ENCODE measurements at regions of chr2 and their contacts with region 1.

Region 1: GRCh38 chr2:46364797-46365457 is 67.7 kb downstream of the EPAS1 start:
- DNase-seq: no peak
- ATAC-seq: no peak
- H3K4me3 ChIP-seq: no peak overlapping the region
- H3K27ac ChIP-seq: no peak overlapping the region
- H3K4me1 ChIP-seq: no peaks in the 10 kb centered on the region
- H3K27me3 ChIP-seq: no peaks in the 10 kb centered on the region

Region 2: DNA sequence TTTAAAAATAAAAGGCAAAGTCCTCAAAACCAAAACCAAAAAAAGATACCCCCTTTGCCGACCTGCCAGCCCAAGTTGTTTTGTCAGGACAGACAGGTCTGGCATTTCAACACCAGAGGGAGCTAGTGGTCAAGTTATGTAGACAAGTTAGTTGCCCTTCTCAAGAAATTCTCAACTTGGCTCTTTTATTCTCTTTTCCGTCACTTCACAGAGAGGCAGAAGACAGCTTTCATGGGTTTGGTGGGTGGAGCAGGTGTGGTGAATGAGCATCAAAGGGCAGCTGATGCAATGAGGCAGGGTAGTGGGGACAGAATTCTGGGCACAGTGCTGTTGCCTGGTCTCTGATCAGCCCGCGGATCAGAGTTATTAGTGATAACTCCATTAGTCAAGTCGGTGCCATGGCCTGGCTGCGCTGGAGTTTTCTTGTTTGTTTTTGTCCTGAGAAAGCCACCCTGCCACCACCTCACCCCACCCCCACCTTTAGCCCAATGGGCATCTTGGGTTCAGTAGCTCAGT is 371.4 kb before region 1 on chr2:
- intact Hi-C with region 1: loop called in 1 of 2 experiments (anchors 5 kb)
- DNase-seq: peak in 1 of 2 donors; percentile 69
- ATAC-seq: peak; percentile 86
- H3K4me3 ChIP-seq: no peak overlapping the region
- H3K27ac ChIP-seq: peak overlapping the region in 1 of 2 donors; percentile 68
- H3K4me1 ChIP-seq: no peaks in the 10 kb centered on the region
- H3K27me3 ChIP-seq: no peaks in the 10 kb centered on the region

Region 3: DNA sequence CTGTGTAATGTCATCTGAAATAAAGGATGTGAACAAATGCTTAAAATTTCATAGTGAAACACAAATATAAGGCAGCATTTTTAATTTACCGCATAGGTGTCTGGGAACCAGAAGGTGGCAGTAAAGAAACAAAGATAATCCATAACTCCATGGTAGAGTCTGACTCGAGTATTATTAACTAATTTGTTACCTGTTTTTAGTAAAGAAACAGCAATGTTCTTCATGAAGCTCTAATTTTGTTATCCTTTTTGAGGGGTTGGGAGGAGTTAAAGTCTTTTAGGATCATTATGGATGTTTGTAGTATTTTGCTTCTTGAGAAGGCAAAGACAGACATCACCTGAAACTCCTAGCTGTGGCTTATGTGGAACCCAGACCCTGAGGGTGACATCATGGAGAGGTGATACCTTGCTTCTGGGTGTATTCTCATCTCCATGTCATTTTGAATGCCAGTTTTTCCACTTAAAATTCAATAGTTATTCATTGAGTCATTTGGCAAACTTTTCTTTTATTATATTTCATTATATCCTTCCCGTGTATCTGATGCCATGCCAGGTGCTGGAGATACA is 353.9 kb before region 1 on chr2:
- intact Hi-C with region 1: loop called (anchors 5 kb)
- DNase-seq: no peak
- ATAC-seq: no peak
- H3K4me3 ChIP-seq: no peak overlapping the region
- H3K27ac ChIP-seq: no peak overlapping the region
- H3K4me1 ChIP-seq: peaks cover 0 to 8% of the 10 kb centered on the region in 2 donors
- H3K27me3 ChIP-seq: no peaks in the 10 kb centered on the region

Region 4: DNA sequence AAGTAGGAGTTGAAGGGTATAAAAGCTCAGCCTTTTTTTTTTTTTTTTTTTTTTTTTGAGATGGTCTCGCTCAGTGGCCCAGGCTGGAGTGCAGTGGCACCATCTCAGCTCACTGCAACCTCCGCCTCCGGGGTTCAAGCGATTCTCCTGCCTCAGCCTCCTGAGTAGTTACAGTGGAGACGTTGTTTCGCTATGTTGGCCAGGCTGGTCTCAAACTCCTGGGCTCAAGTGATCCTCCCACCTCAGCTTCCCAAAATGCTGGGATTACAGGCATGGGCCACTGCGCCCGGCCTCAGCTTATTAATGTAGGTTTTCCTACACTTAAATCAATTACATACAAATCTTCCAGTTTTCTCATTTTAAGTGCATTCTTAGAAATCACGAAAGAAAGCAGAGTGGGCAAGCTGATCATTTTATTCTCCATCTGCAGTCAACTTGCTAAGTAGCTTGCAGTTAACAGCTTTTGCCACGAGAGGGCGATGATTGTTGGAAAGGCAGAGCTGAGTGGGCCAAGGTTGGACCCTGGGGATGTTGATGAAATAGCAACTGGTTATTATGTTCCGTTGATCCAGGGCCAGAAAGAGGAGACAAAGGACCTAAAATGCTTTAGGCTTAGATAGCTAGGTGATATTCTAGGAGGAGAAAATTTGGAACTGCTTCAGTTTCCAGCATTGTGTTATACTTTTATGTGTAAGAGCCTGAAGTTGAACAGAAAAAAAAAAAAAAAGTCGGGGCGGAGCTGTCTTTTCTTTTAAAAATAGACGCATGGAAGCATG is 302.1 kb before region 1 on chr2:
- intact Hi-C with region 1: loop called (anchors 5 kb)
- DNase-seq: peak; percentile 84
- ATAC-seq: peak; percentile 89
- H3K4me3 ChIP-seq: no peak overlapping the region
- H3K27ac ChIP-seq: no peak overlapping the region
- H3K4me1 ChIP-seq: no peaks in the 10 kb centered on the region
- H3K27me3 ChIP-seq: peaks cover 0 to 2% of the 10 kb centered on the region in 2 donors

Region 5: DNA sequence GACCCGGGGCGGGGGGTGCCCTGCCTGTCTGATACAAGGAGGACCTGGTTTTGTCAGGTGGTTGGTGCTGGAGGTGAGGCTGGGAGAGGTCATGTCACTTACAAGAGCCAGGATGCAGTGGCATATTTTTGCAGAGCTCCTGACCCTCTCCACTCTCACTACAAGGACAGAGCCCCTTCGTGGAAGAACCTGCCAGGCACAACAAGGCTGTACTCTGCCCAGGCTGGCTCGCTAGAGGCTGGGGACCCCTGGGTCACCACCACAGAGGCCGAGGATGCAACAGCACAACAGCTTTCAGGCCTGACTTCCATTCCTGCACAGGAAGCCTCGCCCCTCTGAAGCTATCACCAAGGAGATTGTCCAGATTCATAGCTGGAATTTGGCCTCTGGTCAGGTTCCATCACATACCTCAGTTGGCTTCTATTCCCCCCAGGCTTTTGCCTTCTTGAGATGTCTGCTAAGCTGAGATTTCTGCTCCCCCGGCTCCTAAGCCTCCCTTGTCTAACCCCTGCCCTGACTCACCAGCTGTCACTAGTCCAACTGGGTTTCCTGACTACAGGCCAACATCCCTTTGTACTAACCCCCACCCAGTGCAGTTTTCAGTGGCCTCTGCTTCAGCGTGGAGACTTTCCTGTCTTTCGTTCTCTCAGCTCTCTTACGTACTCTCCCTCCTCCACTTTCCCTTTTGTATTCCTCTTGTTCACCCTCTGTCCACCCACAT is 200.2 kb before region 1 on chr2:
- intact Hi-C with region 1: loop called in 1 of 2 experiments (anchors 10 kb)
- DNase-seq: peak; percentile 87 to 92
- ATAC-seq: peak; percentile 91
- H3K4me3 ChIP-seq: no peak overlapping the region
- H3K27ac ChIP-seq: peak overlapping the region; percentile 19 to 85
- H3K4me1 ChIP-seq: peaks cover 1 to 4% of the 10 kb centered on the region in 2 donors
- H3K27me3 ChIP-seq: no peaks in the 10 kb centered on the region

Region 6: GRCh38 chr2:46230115-46230571 is 134.8 kb before region 1 on chr2:
- intact Hi-C with region 1: loop called in 1 of 2 experiments (anchors 5 kb)
- DNase-seq: peak in 1 of 2 donors; percentile 81
- ATAC-seq: peak; percentile 83
- H3K4me3 ChIP-seq: no peak overlapping the region
- H3K27ac ChIP-seq: no peak overlapping the region
- H3K4me1 ChIP-seq: peaks cover 0 to 2% of the 10 kb centered on the region in 2 donors
- H3K27me3 ChIP-seq: no peaks in the 10 kb centered on the region

Region 7: DNA sequence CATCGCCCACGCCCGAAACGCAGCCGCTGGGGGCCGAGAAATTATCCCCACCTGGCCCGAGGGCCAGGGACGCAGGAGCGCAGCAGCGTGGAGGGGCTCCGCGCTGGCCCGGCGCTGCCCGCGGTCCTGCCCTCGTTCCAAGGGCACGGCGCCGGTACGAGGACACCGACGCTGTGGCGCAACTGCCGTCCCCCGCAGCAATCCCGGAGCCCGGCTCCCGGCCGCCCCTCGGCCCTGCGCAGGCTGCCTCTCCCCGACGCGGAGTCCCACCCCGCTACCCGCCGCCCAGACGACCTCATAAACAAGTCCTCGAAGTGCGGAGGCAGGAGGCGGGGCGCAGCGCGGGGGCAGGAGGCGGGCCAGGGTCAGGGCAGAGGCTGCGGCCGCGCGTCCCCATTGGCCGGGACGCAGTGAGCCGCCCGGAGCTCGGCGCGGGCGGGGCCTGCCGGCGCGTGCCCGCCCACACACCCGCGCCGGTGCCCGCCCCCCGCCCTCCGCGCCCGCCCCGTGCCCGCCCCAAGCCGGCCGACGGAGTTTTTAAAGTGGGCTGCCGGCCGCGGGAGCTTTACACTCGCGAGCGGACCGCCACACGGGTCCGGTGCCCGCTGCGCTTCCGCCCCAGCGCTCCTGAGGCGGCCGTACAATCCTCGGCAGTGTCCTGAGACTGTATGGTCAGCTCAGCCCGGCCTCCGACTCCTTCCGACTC is 67.9 kb before region 1 on chr2 and contains the start of gene EPAS1:
- intact Hi-C with region 1: loop called (anchors 1 kb)
- DNase-seq: peak; percentile 98 to 99
- ATAC-seq: peak; percentile 88
- H3K4me3 ChIP-seq: peak within 1 kb of the TSS; percentile 86 to 87
- H3K27ac ChIP-seq: peak within 1 kb of the TSS; percentile 43 to 66
- H3K4me1 ChIP-seq: no peaks in the 10 kb centered on the region
- H3K27me3 ChIP-seq: no peaks in the 10 kb centered on the region
- total RNA-seq, gene EPAS1: 414 to 954 TPM

Region 8: DNA sequence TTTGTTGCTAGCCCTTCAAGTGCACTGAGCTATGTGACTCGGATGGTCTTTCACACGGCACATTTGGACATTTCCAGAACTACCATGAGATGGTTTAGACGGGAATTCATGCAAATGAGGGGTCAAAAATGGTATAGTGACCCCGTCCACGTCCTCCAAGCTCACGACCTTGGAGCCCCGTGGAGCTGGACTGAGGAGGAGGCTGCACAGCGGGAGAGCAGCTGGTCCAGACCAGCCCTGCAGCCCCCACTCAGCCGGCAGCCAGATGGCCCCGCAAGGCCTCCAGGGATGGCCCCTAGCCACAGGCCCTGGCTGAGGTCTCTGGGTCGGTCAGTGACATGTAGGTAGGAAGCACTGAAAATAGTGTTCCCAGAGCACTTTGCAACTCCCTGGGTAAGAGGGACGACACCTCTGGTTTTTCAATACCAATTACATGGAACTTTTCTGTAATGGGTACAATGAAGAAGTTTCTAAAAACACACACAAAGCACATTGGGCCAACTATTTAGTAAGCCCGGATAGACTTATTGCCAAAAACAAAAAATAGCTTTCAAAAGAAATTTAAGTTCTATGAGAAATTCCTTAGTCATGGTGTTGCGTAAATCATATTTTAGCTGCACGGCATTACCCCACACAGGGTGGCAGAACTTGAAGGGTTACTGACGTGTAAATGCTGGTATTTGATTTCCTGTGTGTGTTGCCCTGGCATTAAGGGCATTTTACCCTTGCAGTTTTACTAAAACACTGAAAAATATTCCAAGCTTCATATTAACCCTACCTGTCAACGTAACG is 21.1 kb after region 1 on chr2:
- intact Hi-C with region 1: no loop called
- DNase-seq: peak in 1 of 2 donors; percentile 50
- ATAC-seq: peak; percentile 52
- H3K4me3 ChIP-seq: no peak overlapping the region
- H3K27ac ChIP-seq: no peak overlapping the region
- H3K4me1 ChIP-seq: peaks cover 0 to 5% of the 10 kb centered on the region in 2 donors
- H3K27me3 ChIP-seq: no peaks in the 10 kb centered on the region

Region 9: DNA sequence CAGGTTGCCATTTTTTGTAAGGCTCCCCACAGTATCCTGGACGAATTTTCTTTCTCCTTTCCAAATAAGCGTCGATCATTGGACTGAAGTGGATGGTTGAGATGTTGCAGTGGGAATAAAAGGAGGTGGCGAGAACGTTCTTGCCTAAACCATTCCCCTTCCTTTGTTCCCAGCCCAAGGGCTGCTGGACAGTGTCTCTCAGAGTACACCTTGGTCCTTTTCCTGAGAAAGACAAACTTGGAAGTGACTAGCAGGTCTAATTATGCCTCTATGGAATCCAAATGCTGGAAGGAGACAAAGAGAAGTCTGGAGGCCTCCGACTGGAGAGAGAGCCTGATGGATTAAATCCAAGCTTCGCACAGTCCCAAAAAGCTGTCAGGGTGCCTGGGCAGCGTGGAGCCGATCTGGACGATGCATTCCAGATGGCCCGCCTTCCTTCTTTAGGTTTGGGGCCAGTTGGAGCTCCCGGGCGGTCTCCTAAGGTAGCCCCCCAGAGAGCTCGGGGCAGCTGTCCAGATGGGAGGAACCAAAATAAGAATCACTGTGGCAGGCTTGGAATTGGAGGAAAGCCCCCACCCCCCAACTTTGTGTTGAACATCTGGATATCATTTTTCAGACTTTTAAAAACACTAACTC is 301.2 kb after region 1 on chr2:
- intact Hi-C with region 1: no loop called
- DNase-seq: peak; percentile 67 to 71
- ATAC-seq: peak; percentile 58
- H3K4me3 ChIP-seq: no peak overlapping the region
- H3K27ac ChIP-seq: peak overlapping the region in 1 of 2 donors; percentile 6
- H3K4me1 ChIP-seq: peaks cover 0 to 11% of the 10 kb centered on the region in 2 donors
- H3K27me3 ChIP-seq: no peaks in the 10 kb centered on the region